Activated T-helper 1 cell treated with anti-CD3 and anti-CD28 coated beads, Interleukin-12 subunit alpha, Interleukin-12 subunit beta, Interleukin-2, Interleukin-4 antibody, amounts not matched to agents 30 ng/mL and 10 ng/mL and 1 ng/mL, durations not matched to agents 14 hours and 24 hours and 36 hours (primary cell): ENCODE measurements at regions of chr7 and their contacts with region 1.

Region 1: DNA sequence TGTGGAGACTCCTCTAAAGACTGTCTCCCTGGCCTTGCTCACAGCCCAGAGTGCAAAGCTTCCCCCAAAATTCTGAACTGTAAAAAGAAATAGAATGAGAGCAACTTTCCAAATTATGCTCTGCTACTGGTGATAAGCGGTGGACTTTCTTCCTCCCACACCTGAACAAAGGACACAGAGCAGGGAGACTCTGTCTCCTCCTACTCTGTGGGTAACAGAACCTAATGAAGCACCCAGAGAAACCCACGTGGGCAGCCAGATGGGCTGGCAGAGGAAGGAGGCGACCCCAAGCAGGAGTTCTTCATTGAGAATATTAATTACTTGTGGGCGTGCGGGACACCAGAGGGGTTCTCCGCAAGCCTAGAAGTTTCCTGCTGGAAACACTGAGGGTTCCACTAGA is 139.5 kb downstream of the KMT2E start:
- DNase-seq: no peak
- H3K4me3 Mint-ChIP-seq: no peak overlapping the region
- H3K27ac Mint-ChIP-seq: no peak overlapping the region
- H3K4me1 Mint-ChIP-seq: peaks cover 17% of the 10 kb centered on the region
- H3K27me3 Mint-ChIP-seq: no peaks in the 10 kb centered on the region

Region 2: GRCh38 chr7:105336009-105336408 is 182.5 kb after region 1 on chr7:
- intact Hi-C with region 1: loop called (anchors 1 kb)
- DNase-seq: no peak
- H3K4me3 Mint-ChIP-seq: no peak overlapping the region
- H3K27ac Mint-ChIP-seq: no peak overlapping the region
- H3K4me1 Mint-ChIP-seq: peaks cover 13% of the 10 kb centered on the region
- H3K27me3 Mint-ChIP-seq: no peaks in the 10 kb centered on the region

Region 3: GRCh38 chr7:105487579-105488571 is 334.3 kb after region 1 on chr7:
- intact Hi-C with region 1: loop called (anchors 1 kb)
- DNase-seq: no peak
- H3K4me3 Mint-ChIP-seq: no peak overlapping the region
- H3K27ac Mint-ChIP-seq: no peak overlapping the region
- H3K4me1 Mint-ChIP-seq: no peaks in the 10 kb centered on the region
- H3K27me3 Mint-ChIP-seq: no peaks in the 10 kb centered on the region